Activated T-helper 2 cell treated with anti-CD3 and anti-CD28 coated beads, Interferon-gamma antibody, Interleukin-2, Interleukin-4, amounts not matched to agents 10 μg/mL and 5 μg/mL and 100 μg/mL, durations not matched to agents 14 hours and 24 hours and 36 hours (primary cell): ENCODE measurements at regions of chr19 and their contacts with region 1.

Region 1: DNA sequence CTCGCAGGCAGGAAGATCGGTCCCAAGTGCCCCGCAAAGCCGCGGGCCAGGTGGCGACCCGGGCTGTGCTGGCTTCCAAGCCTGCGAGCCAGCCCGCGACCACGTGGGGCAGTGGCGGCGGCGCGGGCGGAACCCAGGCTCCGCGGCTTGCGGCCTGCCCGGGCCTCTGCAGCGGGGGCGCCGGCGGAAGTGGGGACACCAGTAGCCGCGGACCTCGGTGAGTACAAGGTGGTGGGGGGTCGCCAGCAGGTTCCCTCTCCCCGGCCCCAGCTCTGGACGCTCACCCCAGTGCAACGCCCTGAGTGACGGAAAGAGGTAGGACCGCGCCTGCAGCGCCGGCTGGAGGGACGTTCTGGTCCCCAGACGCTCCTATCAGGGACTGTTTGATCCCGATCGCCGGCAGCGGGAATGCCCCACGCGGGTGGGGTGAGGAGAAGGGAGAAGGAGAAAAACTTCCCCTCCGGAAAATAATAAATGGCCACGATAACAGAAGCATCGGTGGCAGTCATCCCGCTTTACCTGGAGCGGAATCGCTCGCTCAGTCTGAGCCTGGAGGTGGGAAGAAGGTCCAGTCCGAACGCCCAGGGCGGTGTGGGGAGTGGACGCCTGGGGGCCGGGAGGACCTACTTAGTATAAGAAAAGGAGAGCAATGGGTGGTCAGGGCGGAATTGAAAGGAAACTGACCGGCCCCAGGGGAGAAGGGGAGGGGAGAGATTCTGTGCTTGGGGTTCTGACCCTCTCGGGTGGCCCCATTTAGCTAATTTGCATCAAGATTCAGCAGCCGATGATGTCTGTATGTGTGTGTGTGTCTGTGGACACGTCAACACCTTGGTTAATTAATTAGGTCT is at the start of gene GEMIN7:
- DNase-seq: peak; percentile 75
- H3K4me3 Mint-ChIP-seq: peak within 1 kb of the TSS; percentile 99
- H3K27ac Mint-ChIP-seq: peak within 1 kb of the TSS; percentile 89
- H3K4me1 Mint-ChIP-seq: peaks cover 33% of the 10 kb centered on the region
- H3K27me3 Mint-ChIP-seq: no peaks in the 10 kb centered on the region
- total RNA-seq, gene GEMIN7: 44.9 and 49.4 TPM in 2 replicates

Region 2: DNA sequence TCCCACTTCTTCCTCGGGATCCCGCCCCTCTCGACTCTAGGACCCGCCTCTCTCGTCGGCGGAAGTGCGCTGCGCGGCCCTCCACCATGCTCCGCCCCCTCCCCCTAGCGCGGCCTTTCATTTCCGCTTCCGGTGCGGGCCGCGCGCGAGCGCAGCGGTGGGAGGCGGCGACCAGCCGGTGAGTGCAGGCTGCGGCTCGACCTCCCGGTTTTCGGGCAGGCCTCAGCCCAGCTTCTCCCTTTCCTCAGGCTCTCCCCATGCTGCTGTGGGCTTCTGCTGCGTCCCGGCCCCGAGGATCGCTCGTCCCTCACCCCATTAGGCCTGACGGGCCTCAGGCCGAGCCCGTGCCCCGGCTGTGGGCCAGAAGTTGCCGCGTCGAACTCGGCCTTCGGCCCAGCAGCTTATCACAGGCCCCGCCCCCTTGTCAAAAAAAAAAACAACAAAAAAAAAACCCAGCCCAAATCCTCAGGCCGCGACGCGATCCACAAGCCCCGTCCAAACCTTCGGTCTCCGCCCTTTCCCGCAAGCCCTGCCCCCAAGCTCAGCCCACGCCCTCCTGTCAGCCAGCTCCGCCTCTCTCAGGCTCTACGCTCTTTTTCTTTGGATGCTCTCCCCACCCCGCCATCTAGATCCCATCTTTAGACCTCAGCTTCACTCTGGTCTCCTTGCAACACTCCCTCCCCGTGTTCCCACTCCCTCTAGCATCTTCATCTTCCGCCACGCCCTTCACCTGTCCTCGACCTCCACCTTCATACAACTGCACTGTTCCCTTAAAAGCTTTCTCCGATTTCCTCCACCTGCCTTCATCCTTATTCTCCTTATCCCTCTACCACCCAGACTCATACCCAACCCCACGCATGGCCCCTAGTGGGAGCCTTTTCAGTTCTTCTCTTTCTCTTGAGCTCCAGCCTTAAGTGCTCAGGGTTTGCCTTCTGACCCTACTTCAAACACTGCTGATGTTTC is 40.1 kb before region 1 on chr19 and contains the start of gene CLASRP:
- intact Hi-C with region 1: loop called (anchors 5 kb)
- DNase-seq: peak; percentile 84
- H3K4me3 Mint-ChIP-seq: peak within 1 kb of the TSS; percentile 99
- H3K27ac Mint-ChIP-seq: peak within 1 kb of the TSS; percentile 98
- H3K4me1 Mint-ChIP-seq: peaks cover 21% of the 10 kb centered on the region
- H3K27me3 Mint-ChIP-seq: no peaks in the 10 kb centered on the region
- total RNA-seq, gene CLASRP: 102 and 105 TPM in 2 replicates

Region 3: DNA sequence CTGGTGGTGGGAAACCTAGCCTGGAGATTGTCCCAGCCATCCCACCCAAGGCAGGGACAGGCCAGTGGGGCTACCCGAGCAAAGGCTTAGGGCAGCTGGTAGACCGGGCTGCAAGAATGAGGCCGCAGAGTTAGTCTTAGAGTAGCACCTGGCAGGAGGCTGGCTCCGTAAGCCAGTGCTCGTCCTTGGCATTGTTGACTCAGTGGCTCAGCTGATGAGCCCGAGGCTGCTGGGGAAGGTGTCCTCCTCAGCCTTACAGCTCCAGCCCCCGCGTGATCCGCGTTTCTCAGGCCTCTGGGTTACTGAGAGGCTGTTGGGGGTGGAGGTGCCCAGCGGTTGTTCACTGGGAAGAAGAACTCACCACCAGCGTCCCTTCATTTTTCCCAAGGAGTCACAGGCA is 38.4 kb after region 1 on chr19:
- intact Hi-C with region 1: loop called (anchors 5 kb)
- DNase-seq: no peak
- H3K4me3 Mint-ChIP-seq: no peak overlapping the region
- H3K27ac Mint-ChIP-seq: peak overlapping the region; percentile 53
- H3K4me1 Mint-ChIP-seq: peaks cover 49% of the 10 kb centered on the region
- H3K27me3 Mint-ChIP-seq: no peaks in the 10 kb centered on the region

Region 4: GRCh38 chr19:45125926-45126493 is 46.7 kb after region 1 on chr19:
- intact Hi-C with region 1: loop called (anchors 2 kb)
- DNase-seq: peak; percentile 58
- H3K4me3 Mint-ChIP-seq: no peak overlapping the region
- H3K27ac Mint-ChIP-seq: no peak overlapping the region
- H3K4me1 Mint-ChIP-seq: peaks cover 8% of the 10 kb centered on the region
- H3K27me3 Mint-ChIP-seq: no peaks in the 10 kb centered on the region